Caco-2 (cell line): ENCODE measurements at regions of chr5 and their contacts with region 1.

Region 1: DNA sequence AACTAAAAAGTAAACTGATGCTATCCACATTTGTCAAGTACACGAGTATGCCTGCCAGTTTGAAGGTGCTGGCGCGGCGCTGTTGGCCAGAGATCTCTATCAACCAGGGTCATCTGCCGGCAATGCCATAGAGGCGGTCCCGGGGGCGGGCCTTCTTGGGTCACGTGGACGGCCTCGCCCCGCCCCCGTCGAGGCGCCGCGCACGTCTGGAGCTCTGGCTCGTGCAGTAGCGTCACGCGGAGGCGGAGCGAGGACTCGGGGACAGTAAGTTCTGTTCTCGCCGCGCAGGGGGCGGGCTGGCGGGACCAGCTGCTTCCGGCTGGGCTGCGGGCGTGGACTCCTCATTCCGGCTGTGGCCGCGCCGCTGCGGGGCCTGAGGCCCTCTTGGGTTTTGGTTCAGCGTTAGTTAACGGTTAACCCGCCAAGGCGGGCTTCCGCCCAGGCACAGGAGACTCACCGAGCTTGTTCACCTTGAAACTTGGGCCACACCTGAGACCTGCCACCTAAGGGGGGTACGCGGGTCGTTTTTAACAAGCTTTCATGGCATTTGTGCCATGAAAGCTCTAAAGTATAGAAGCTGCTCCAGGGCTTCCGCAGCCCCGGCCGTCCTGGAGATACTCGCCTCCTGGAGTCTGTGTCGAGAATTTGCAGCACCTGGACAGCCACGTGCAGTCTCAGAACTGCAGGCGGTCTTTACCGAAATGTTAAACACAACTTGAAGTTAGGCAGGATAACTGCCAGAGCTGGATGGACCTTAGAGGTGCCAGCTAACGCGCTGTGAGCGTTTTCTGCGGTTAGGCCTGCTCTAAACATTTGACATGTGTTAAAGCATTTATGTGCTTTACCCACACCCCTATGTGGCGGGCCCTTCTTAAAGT is at the start of gene RFESD:
- DNase-seq: peak; percentile 99
- H3K4me3 ChIP-seq: peak within 1 kb of the TSS; percentile 27
- H3K4me3 Mint-ChIP-seq: peak within 1 kb of the TSS; percentile 82
- H3K27ac Mint-ChIP-seq: peak within 1 kb of the TSS; percentile 89
- H3K4me1 ChIP-seq: peaks cover 8% of the 10 kb centered on the region; the same call in 1 of the 2 replicates
- H3K4me1 Mint-ChIP-seq: peaks cover 7% of the 10 kb centered on the region
- H3K27me3 ChIP-seq: no peaks in the 10 kb centered on the region
- H3K27me3 Mint-ChIP-seq: no peaks in the 10 kb centered on the region
- CTCF ChIP-seq: peak; percentile 12 to 45
- total RNA-seq, gene RFESD: 1.6 and 2.4 TPM in 2 replicates

Region 2: GRCh38 chr5:95664204-95664786 is 17.5 kb after region 1 on chr5:
- CTCF ChIA-PET with region 1: interaction called, 4 read pairs
- POLR2A ChIA-PET with region 1: interaction called, 4 read pairs
- intact Hi-C with region 1: loop called (anchors 1 kb)
- DNase-seq: peak in 1 of 2 experiments; percentile 23
- H3K4me3 ChIP-seq: no peak overlapping the region
- H3K4me3 Mint-ChIP-seq: no peak overlapping the region
- H3K27ac Mint-ChIP-seq: no peak overlapping the region
- H3K4me1 ChIP-seq: 0 out of 2 replicates have a peak, but pooled peaks cover 4% of the 10 kb centered on the region
- H3K4me1 Mint-ChIP-seq: no peaks in the 10 kb centered on the region
- H3K27me3 ChIP-seq: no peaks in the 10 kb centered on the region
- H3K27me3 Mint-ChIP-seq: no peaks in the 10 kb centered on the region
- CTCF ChIP-seq: peak; percentile 78 to 81

Region 3: DNA sequence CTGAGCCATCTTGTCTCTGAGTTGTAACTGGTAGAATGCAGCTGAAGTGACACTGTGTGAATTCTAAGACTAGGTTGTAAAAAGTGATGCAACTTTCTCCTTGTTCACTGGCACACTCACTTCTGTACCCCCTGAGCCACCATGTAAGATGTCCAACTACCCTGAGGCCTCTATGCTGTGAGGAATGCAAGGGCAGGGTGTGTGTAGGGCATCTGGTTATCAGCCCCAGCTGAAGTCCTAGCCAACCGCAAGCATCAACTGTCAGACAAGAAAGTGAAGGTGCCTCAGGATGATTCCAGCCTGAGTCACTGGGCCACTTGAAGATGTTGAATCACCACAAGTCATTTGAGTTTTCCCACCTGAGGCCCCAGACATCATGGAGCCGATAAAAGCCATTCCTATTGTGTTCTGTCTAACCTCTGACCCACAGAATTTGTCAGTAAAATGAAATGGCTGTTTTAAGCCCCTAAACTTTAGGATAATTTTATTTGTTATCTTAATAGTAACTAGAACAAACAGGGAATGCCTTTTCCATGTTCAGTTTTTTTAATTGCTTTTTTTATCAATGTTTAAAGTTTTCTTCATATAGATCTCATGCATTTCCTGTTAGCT is 65.7 kb after region 1 on chr5:
- CTCF ChIA-PET with region 1: interaction called, 3 read pairs
- POLR2A ChIA-PET with region 1: no interaction called
- intact Hi-C with region 1: loop called (anchors 1 kb)
- DNase-seq: peak; percentile 83 to 95
- H3K4me3 ChIP-seq: no peak overlapping the region
- H3K4me3 Mint-ChIP-seq: peak overlapping the region; percentile 52
- H3K27ac Mint-ChIP-seq: peak overlapping the region; percentile 98
- H3K4me1 ChIP-seq: peaks cover 61% of the 10 kb centered on the region
- H3K4me1 Mint-ChIP-seq: peaks cover 46% of the 10 kb centered on the region
- H3K27me3 ChIP-seq: no peaks in the 10 kb centered on the region
- H3K27me3 Mint-ChIP-seq: no peaks in the 10 kb centered on the region
- CTCF ChIP-seq: no peak

Region 4: DNA sequence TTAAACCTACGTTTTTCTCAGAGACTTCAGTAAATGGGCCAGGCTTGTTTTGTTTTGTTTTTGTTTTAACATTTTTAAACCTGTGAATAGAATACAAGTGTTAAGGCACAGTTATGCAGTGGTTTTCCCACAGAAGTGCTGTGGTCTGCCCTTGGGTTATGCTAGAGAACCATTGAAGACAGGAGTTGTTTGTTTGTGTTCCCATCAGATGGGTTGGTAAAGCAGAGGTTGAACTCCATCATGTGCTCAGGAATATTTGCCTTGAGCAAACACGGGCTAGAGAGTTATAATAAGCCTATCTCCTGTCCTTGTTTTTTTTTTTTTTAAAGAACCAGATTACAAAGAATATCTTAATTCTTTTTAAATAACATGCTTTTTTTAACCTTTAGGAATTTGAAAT is 112.8 kb after region 1 on chr5:
- CTCF ChIA-PET with region 1: interaction called, 4 read pairs
- POLR2A ChIA-PET with region 1: interaction called, 3 read pairs
- intact Hi-C with region 1: loop called (anchors 1 kb)
- DNase-seq: peak; percentile 49 to 56
- H3K4me3 ChIP-seq: no peak overlapping the region
- H3K4me3 Mint-ChIP-seq: no peak overlapping the region
- H3K27ac Mint-ChIP-seq: peak overlapping the region; percentile 67
- H3K4me1 ChIP-seq: peaks cover 30% of the 10 kb centered on the region
- H3K4me1 Mint-ChIP-seq: peaks cover 14% of the 10 kb centered on the region
- H3K27me3 ChIP-seq: no peaks in the 10 kb centered on the region
- H3K27me3 Mint-ChIP-seq: no peaks in the 10 kb centered on the region
- CTCF ChIP-seq: no peak

Region 5: GRCh38 chr5:95835682-95836385 is 189.0 kb after region 1 on chr5:
- CTCF ChIA-PET with region 1: interaction called, 7 read pairs
- POLR2A ChIA-PET with region 1: interaction called, 14 read pairs
- intact Hi-C with region 1: loop called (anchors 1 kb)
- DNase-seq: no peak
- H3K4me3 ChIP-seq: no peak overlapping the region
- H3K4me3 Mint-ChIP-seq: peak overlapping the region; percentile 77
- H3K27ac Mint-ChIP-seq: peak overlapping the region; percentile 87
- H3K4me1 ChIP-seq: no peaks in the 10 kb centered on the region
- H3K4me1 Mint-ChIP-seq: peaks cover 25% of the 10 kb centered on the region
- H3K27me3 ChIP-seq: no peaks in the 10 kb centered on the region
- H3K27me3 Mint-ChIP-seq: no peaks in the 10 kb centered on the region
- CTCF ChIP-seq: no peak

Region 6: DNA sequence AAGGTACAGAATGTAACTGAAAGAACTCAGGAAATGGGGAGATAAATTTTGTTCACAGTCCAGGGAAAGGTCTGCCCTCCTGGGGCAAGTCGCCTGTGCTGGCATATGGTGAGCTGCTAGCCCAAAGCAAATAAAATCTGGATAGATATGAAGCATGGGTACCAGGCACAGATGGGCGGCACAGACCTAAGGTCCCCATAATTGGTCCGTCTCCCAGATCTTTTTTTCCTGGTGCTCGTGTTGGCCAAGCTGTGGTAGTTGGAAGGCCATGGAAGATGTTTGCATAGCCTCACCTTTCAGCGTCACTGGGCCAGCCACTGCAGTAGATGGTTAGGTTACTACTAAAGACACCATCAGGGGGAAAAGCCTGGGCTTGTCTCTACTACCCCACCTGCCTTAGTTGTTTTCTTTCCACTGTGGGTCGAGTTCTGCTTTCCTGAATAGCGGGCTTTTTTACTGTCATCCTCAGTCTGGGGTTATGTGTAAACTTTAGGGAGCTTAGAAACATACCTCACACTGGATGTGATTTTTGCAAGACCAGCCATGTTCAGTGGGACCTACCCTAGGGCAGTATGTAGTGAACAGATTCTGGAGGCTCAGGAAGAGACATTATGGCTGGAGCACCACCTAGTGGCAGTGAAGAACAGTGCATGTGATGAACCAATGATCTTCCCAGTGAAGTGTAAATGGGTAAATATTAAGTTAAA is 199.9 kb after region 1 on chr5:
- CTCF ChIA-PET with region 1: interaction called, 5 read pairs
- POLR2A ChIA-PET with region 1: no interaction called
- intact Hi-C with region 1: loop called (anchors 1 kb)
- DNase-seq: peak; percentile 66 to 78
- H3K4me3 ChIP-seq: no peak overlapping the region
- H3K4me3 Mint-ChIP-seq: no peak overlapping the region
- H3K27ac Mint-ChIP-seq: no peak overlapping the region
- H3K4me1 ChIP-seq: no peaks in the 10 kb centered on the region
- H3K4me1 Mint-ChIP-seq: no peaks in the 10 kb centered on the region
- H3K27me3 ChIP-seq: no peaks in the 10 kb centered on the region
- H3K27me3 Mint-ChIP-seq: no peaks in the 10 kb centered on the region
- CTCF ChIP-seq: peak; percentile 91 to 92

Region 7: DNA sequence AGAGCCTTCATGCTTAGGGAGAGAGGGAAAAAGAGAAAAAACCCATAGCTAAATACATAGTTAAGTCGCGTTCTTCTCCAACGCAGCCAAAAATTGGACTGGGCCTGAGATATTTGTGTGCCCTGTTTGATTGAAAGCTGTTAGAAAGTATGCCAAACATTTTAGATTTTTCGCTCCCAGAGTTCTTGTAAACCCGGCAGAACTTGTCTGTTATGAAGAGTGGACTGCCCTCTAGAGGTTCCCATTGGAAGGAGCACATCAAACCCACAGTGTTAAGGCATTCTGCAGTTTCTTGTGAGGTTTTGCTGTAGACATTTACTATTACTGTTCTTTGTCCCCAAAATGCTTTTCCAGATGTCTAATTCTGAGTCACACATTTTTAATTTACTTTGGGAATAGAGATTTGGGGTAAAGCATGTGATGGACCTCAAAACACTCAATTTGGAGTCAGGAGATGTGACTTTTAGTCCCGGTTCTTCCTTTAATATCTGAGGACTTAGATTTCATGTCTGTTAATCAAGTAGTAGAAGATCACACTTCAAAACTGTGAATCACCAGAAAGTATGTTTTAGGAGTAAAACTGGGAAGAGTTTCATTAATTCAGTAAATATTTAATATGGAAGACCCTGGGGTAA is 689.7 kb after region 1 on chr5:
- CTCF ChIA-PET with region 1: no interaction called
- POLR2A ChIA-PET with region 1: no interaction called
- intact Hi-C with region 1: loop called (anchors 5 kb)
- DNase-seq: peak; percentile 78 to 79
- H3K4me3 ChIP-seq: no peak overlapping the region
- H3K4me3 Mint-ChIP-seq: no peak overlapping the region
- H3K27ac Mint-ChIP-seq: no peak overlapping the region
- H3K4me1 ChIP-seq: peaks cover 40% of the 10 kb centered on the region
- H3K4me1 Mint-ChIP-seq: peaks cover 39% of the 10 kb centered on the region
- H3K27me3 ChIP-seq: no peaks in the 10 kb centered on the region
- H3K27me3 Mint-ChIP-seq: no peaks in the 10 kb centered on the region
- CTCF ChIP-seq: peak; percentile 84 to 93